OCI-LY7 (cell line): ENCODE measurements at regions of chr17 and their contacts with region 1.

Region 1: DNA sequence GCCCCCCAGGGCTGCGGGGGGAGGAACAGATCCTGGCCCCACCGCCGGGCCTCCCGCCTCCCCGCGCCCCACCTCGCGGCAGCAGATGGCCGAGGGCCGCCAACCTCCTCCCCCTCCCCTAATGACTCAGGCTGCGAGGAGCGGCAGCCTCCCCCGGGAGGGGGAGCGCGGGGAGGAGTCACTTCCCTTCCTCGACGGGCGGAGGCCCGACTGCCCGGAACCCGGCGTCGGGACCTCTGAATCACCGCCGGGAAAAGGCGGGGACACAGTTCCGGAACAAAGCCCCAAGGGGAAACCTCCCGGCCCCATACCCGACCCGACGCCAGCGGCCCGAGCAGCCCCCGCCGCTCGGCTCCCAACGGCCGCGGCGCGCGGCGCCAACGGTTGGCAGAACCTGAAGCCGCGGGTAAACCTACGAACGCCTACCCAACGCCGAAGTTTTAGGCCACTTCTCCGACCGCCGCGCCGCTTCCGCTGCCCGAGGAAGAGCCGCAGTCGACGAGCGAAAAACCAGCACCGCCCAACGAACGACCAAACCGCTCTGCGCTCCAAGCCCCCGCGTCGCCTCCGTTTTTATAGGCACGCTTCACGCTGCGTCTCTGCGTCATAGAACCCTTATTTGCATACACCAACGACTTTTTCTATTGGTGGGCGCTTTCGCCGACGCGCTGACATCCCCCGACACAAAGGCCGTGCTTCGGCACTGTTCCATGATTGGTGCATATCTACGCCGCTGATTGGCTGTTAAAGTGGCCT is 5.2 kb upstream of the UNK start:
- DNase-seq: peak; percentile 100
- H3K4me3 ChIP-seq: peak overlapping the region; percentile 83
- H3K27ac ChIP-seq: peak overlapping the region; percentile 84
- H3K4me1 ChIP-seq: peaks cover 45% of the 10 kb centered on the region
- CTCF ChIP-seq: peak; percentile 71

Region 2: DNA sequence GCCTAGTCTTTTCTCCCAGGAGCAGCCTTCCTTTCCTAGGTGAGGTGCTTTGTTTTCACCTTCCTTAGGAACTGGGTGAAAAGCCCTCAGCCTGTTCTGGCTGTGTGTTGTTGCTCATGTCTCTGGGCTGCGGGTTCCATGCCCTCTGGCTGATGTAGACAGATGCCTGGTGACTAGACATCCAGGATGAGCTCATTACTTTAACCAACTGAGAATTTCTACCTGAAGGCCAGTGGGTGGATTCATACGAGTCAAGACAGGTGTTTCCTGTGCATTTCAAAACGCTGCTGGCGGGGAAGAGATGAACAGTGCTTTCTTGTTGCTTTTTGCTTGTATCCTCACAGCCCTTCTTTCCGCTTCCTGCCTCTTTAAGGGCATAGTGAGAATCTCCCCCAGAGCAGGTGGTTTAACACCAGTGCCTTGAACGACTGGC is 90.0 kb before region 1 on chr17:
- CTCF ChIA-PET with region 1: no interaction called
- POLR2A ChIA-PET with region 1: interaction called, 14 read pairs
- intact Hi-C with region 1: no loop called
- DNase-seq: peak; percentile 98
- H3K4me3 ChIP-seq: peak overlapping the region; percentile 53
- H3K27ac ChIP-seq: peak overlapping the region; percentile 97
- H3K4me1 ChIP-seq: peaks cover 69% of the 10 kb centered on the region
- CTCF ChIP-seq: no peak

Region 3: DNA sequence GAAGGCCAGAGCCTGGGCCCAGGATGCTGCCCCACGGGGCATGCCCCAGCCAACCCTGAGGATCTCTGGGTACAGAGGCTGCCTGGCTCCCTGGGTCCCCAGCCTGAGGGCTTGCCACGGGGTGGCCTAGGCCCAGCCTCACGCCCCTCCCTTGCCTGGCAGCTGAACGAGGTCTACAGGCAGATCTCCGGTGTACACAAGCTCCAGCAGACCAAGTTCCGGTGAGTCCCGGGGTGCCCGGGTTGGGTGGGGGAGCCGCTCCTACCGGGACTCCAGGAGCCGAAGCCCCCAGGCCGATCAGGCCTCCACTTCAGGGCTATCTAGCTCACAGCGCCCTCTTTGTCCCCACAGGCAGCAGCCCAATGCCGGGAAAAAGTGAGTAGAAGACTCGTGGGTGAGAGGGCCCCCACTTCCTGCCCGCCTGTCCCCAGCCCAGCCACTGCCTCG is 38.8 kb before region 1 on chr17:
- CTCF ChIA-PET with region 1: no interaction called
- POLR2A ChIA-PET with region 1: no interaction called
- intact Hi-C with region 1: no loop called
- DNase-seq: no peak
- H3K4me3 ChIP-seq: no peak overlapping the region
- H3K27ac ChIP-seq: no peak overlapping the region
- H3K4me1 ChIP-seq: peaks cover 14% of the 10 kb centered on the region
- CTCF ChIP-seq: peak; percentile 45

Region 4: DNA sequence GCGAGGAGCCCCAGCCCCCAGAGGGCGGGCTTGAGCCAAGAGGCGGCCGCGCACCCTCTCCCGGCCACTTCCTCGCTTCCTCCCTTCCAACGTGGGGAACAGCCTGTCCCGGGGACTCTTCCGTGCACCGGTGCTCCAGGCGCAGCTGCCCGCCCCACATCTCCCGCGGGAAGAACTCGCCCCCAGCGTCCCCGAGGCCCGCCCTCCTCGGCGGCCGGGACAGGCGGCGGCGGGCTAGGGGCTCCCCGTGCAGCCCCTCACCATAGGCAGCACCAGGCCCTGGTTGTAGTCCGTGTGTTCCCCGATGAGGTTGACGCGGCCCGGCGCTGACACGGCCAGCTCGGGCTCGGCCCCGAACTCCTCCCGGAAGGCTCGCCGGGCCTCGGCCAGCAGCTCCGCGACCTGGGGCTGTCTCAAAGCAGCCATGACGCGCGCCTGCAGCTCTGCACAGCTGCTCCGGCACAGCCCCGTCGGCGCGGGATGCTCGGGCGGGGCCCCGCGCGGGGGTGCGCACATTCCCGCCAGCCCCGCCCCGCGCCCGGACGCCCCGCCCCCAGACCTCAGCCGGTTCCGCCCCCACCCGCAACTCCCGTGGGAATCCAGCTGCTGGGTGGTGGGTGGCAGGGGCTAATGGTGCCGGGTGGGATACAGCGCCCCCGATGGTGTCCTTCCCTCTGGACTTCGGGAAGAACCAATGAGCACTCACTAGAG is 14.5 kb before region 1 on chr17 and contains the start of gene GALK1:
- CTCF ChIA-PET with region 1: interaction called, 5 read pairs
- POLR2A ChIA-PET with region 1: interaction called, 12 read pairs
- intact Hi-C with region 1: loop called (anchors 1 kb)
- DNase-seq: peak; percentile 91
- H3K4me3 ChIP-seq: peak within 1 kb of the TSS; percentile 75
- H3K27ac ChIP-seq: peak within 1 kb of the TSS; percentile 22
- H3K4me1 ChIP-seq: peaks cover 18% of the 10 kb centered on the region
- CTCF ChIP-seq: peak; percentile 48
- total RNA-seq, gene GALK1: 88.2 and 99.4 TPM in 2 replicates

Region 5: DNA sequence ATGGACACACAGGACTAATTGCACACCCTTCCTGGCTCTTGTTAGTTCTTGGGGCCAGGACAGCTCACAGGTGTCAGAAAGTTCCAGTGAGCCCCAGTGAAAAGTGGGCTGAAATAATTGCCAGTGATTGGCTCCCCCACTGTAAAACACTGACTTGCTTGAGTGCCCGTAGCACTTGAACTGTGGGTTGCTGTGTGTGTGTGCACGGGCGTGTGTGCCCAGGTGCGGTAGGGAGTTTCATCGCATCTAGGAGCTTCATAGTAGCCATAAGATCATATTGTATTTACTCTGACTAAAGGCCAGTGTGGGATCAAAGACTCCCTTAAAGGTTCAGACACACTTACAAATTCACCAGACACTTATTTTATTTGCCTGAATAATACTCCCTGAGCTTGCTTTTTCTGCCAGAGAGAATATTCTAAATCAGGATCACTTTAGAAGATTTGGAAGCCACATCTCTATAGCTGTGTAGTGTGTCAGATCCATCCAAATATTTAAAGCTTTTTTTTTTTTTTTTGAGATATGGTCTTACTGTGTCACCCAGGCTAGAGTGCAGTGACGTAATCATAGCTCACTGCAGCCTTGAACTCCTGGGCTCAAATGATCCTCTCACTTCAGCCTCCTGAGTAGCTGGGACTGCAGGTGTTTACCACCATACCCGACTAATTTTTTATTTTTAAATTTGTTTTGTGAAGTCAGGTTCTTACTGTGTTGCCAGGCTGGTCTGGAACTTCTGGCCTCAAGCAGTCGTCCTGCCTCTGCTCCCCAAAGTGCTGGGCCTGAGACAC is 16.6 kb after region 1 on chr17:
- CTCF ChIA-PET with region 1: interaction called, 3 read pairs
- POLR2A ChIA-PET with region 1: interaction called, 33 read pairs
- intact Hi-C with region 1: no loop called
- DNase-seq: no peak
- H3K4me3 ChIP-seq: no peak overlapping the region
- H3K27ac ChIP-seq: no peak overlapping the region
- H3K4me1 ChIP-seq: no peaks in the 10 kb centered on the region
- CTCF ChIP-seq: no peak

Region 6: DNA sequence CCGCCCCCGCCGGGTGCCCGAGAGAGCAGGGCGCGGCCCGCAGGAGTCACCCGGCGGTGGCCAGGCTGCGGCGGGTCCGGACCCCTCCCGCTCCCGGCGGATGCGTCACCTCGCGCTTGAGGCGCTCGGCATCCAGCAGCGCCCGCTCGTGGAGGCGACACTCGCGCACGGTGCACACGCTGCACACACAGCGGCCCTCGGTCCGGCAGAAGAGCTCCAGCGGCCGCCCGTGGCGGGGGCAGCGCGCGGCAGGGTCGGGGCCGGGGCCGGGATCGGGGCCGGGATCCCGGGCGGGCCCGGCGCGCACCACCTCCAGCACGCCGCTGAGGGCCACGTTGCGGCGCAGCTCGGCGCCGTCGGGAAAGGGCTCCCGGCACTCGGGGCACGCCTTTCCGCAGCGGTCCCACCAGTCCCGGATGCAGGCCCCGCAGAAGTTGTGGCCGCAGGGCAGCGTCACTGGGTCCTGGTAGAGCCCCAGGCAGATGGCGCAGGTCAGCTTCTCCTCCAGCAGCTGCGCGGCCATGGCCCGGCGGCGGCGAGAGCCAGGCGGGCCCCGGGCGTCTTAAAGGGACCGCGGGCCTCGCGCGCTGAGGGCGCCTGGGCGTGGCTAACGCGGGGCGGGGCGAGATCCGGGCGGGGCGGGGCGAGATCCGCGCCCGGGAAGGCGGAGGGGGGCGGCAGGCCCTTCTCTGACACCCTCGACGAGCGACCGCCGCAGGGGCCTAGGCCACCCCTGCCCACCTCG is 117.2 kb after region 1 on chr17 and contains the start of gene TRIM65:
- CTCF ChIA-PET with region 1: no interaction called
- POLR2A ChIA-PET with region 1: interaction called, 3 read pairs
- intact Hi-C with region 1: loop called (anchors 2 kb)
- DNase-seq: peak; percentile 90
- H3K4me3 ChIP-seq: peak within 1 kb of the TSS; percentile 80
- H3K27ac ChIP-seq: peak within 1 kb of the TSS; percentile 55
- H3K4me1 ChIP-seq: peaks cover 23% of the 10 kb centered on the region
- CTCF ChIP-seq: peak; percentile 54
- total RNA-seq, gene TRIM65: 45.0 and 54.2 TPM in 2 replicates